Sciatic nerve (tissue), 2 donors: ENCODE measurements at regions of chr6 and their contacts with region 1.

Region 1: DNA sequence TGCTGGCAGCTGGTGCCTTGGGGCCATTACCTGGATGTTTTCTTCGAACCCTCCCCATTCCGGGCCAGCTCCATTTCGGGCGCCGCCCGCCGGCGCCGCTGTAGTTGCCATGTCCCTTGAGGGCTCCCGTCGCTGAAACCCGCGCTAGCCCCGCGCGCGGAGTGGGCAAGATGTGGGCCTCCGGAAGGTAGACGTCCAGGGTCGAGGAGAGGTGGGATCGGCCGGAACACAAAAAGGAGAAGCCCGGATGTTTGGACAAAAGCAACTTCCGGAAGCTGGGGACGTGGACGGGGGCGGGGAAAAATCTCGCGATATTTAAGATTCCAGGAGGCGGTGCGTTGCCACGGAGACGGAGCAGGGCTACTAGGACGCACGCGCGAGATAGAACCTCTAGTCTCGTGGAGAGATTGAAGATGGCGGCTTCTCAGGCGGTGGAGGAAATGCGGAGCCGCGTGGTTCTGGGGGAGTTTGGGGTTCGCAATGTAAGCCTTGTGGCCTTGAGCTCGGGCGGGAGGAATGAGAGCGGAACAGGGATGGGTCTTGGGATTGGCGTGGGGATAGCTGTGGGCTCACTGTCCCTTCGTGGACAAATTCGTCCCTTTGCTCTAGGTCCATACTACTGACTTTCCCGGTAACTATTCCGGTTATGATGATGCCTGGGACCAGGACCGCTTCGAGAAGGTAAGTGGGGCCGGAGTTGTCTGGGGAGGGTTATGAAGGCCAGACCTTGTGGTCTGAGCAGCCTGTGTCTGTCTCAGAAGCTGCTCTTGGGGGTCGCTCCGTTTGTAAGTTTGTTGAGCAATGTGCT is at the starts of genes POLR1C and YIPF3:
- DNase-seq: peak; percentile 99
- ATAC-seq: peak; percentile 99
- total RNA-seq, gene POLR1C: 30.3 TPM
- total RNA-seq, gene YIPF3: 66.7 TPM

Region 2: DNA sequence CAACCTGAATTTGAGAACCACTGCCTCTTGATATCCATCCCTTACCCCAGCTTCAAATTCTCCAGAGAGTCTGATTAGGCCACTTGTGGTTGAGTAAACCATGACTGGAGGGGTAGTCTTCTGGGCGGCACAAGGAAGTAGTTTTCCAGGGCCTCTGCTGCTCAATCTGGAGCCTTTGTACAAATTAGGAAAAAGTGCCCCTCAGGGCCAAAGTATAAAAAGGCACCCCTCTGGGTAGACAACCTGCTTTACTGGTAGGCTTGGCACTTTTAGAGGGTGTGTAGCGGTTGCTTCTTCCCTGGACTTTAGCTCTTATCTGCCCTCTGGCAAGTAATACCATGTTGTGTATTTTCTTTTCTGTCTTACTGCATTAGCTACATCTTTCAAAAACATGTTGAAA is 670.4 kb before region 1 on chr6:
- intact Hi-C with region 1: no loop called
- DNase-seq: no peak
- ATAC-seq: no peak

Region 3: DNA sequence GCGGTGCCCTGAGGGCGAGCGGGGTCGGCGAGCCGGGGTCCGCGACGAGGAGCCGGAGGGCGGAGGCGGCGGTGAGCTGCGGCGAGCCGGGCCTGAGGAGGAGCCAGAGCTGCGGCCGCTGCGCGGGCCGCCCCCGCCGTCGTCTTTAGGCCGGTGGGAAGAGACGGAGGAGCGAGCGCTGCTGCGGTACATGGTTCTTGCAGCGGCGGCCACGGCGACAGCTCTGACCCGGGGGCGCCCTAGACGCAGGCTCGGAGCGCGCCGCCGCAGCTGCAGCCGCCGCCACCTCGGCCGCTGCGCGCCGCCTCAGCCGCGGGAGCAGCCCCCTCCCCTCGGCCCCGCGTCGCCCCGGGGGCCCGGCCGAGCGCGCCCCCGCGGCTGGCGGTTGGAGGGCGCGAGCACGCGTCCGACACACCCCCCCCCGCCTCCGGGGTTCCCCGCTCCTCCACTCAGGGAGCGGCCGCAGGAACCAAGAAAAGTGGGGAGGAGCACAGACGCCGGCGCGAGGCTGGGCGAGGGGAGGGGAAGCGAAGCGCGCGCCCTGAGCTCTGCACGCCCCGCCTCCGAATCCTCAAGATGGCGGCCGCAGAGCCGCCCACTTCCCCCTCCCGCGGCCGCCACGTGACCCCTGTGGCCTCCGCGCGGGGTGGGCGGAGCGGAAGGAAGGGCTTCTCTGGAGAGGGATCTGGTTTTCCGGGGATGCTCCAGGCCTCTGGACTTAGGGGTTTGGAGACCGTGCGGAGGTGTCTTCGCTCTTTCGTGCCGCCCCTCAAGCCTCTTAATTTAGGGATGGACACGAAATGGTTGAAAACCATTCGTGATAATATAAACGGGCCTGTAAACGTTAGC is 147.5 kb before region 1 on chr6 and contains the start of gene ZNF318:
- intact Hi-C with region 1: loop called (anchors 5 kb)
- DNase-seq: peak; percentile 97
- ATAC-seq: peak; percentile 100
- total RNA-seq, gene ZNF318: 26.6 TPM

Region 4: DNA sequence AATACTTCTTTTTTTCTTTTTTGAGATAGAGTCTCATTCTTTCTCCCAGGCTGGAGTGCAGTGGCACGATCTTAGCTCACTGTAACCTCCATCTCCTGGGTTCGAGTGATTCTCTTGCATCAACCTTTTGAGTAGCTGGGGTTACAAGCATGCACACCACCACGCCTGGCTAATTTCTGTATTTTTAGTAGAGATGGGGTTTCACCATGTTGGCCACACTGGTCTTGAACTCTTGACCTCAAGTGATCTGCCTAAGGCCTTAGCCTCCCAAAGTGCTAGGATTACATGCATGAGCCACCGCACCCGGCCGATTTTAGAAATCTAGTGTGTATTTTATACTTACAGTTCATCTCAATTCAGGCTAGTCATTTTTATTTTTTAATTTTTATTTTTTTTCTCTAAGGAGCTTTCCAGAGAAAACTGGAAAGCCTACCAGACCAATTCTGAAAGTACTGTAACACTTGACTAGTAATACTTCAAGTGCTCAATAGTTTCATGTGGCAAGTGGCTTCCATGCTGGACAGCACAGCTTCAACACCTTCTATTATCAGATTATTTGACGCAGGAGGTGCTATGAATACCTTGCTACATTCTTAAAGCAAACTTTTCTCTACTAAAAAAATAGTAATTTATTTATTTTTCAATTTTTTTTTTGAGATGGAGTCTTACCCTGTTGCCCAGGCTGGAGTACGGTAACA is 25.0 kb after region 1 on chr6:
- intact Hi-C with region 1: no loop called
- DNase-seq: no peak
- ATAC-seq: no peak

Region 5: GRCh38 chr6:43635387-43636307 is 118.7 kb after region 1 on chr6 and contains the start of gene MAD2L1BP:
- intact Hi-C with region 1: no loop called
- DNase-seq: peak; percentile 88
- ATAC-seq: peak; percentile 94
- total RNA-seq, gene MAD2L1BP: 16.8 TPM